Right ventricle myocardium superior (tissue), 1 donor: ENCODE measurements at regions of chr7 and their contacts with region 1.

Region 1: GRCh38 chr7:116443101-116443523 is 56.4 kb upstream of the CAV2 start:
- DNase-seq: no peak
- ATAC-seq: no peak

Region 2: DNA sequence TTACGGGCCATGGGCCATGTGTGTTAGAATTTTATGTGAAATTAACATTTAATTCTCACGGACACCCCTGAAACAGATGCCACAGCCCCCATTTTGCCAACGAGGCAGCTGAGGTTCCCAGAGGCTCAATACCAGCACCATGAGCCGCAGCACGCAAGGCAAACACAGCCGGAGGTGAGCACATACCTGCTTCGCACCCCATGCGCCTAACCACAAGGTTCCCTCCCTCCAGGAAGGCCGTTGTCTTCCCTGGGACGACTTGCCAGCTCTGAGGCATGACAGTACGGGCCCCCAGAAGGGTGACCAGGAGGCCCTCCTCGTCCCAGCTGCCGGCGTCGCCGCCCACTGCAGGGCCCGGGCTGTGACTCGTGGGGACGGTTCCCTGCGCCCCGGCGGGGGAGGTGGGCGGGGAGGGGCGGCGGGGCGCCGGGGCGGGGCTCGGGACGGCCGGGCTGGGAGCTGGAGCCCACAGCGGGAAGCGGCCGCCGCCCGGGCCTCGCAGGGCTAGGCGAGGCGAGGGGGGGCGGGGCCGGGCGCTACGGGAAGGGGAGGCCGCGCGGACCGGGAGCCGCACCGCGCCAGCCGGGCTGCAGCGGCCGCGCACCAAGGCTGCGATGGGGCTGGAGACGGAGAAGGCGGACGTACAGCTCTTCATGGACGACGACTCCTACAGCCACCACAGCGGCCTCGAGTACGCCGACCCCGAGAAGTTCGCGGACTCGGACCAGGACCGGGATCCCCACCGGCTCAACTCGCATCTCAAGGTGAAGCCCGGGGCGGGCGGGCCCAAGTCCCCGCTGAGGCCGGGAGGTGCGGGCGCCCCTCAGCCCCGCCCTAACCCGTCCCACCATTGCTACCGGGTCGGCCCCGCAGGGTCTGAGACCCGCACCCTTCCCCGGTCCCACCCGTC is 56.3 kb after region 1 on chr7 and contains the start of gene CAV2:
- intact Hi-C with region 1: loop called (anchors 10 kb)
- DNase-seq: peak; percentile 86
- ATAC-seq: peak; percentile 92
- total RNA-seq, gene CAV2: 183 TPM